Activated CD4-positive, alpha-beta memory T cell treated with anti-CD3 and anti-CD28 coated beads, Interleukin-2, amount 10 ng/mL, durations not matched to agents 7 days and 5 days (primary cell): ENCODE measurements at regions of chr19 and their contacts with region 1.

Region 1: DNA sequence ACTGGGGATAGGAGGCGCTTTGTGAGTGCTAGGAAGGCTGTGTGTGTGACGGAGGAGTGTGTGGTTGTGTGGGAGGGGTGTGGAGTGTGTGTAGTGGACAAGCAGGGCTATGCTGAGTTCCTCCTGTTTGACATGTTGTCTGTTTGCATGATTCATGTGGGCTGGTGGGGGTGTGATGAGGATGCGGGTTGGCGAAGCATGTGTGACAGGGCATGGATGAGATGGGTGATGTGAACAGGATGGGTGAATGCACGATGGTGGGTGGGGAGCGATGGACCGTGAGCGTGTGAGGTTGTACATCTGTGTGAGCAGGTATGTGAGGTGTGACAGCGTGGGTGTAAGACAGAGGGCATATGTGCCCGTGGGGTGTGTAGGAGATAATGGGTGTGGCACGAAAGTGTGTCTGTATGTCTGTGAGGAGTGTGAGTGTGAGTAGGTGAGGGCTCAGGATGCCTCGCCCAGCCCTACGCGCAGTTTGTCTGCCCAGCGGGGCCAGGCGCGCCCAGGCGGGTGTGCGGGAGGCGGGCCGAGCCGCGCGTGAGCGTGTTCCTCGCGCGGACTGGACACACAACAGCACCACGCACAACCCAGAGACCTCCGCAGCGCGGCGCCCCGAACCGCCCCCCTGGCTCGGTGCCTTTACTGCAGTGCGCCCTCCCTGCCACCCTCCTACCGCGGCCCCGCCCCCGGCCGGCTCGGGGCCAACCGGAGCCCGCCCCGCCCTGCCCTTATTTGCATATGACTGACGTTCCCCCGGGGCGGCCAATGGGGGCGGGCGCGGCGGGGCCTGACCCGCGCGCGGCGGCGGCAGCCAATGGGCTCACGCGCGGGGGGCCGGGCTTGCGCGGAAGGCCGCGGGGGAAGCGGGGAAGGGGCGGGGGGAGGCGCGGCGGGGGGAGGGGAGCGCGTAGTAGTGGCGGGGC is 14.4 kb downstream of the CIC start:
- DNase-seq: peak; percentile 97
- H3K4me3 Mint-ChIP-seq: no peak overlapping the region
- H3K27ac Mint-ChIP-seq: no peak overlapping the region
- H3K4me1 Mint-ChIP-seq: peaks cover 31% of the 10 kb centered on the region
- H3K27me3 Mint-ChIP-seq: no peaks in the 10 kb centered on the region

Region 2: GRCh38 chr19:42121656-42122069 is 161.7 kb before region 1 on chr19:
- CTCF ChIA-PET with region 1: interaction called, 18 read pairs
- POLR2A ChIA-PET with region 1: interaction called, 10 read pairs
- DNase-seq: peak; percentile 80
- H3K4me3 Mint-ChIP-seq: peak overlapping the region; percentile 73
- H3K27ac Mint-ChIP-seq: peak overlapping the region; percentile 94
- H3K4me1 Mint-ChIP-seq: peaks cover 44% of the 10 kb centered on the region
- H3K27me3 Mint-ChIP-seq: no peaks in the 10 kb centered on the region

Region 3: GRCh38 chr19:42176990-42177685 is 106.3 kb before region 1 on chr19:
- CTCF ChIA-PET with region 1: interaction called, 13 read pairs
- POLR2A ChIA-PET with region 1: no interaction called
- DNase-seq: peak; percentile 81
- H3K4me3 Mint-ChIP-seq: no peak overlapping the region
- H3K27ac Mint-ChIP-seq: no peak overlapping the region
- H3K4me1 Mint-ChIP-seq: peaks cover 19% of the 10 kb centered on the region
- H3K27me3 Mint-ChIP-seq: peaks cover 30% of the 10 kb centered on the region

Region 4: GRCh38 chr19:42199440-42200115 is 83.8 kb before region 1 on chr19:
- CTCF ChIA-PET with region 1: interaction called, 10 read pairs
- POLR2A ChIA-PET with region 1: interaction called, 23 read pairs
- DNase-seq: peak; percentile 91
- H3K4me3 Mint-ChIP-seq: peak overlapping the region; percentile 72
- H3K27ac Mint-ChIP-seq: peak overlapping the region; percentile 98
- H3K4me1 Mint-ChIP-seq: peaks cover 86% of the 10 kb centered on the region
- H3K27me3 Mint-ChIP-seq: no peaks in the 10 kb centered on the region

Region 5: DNA sequence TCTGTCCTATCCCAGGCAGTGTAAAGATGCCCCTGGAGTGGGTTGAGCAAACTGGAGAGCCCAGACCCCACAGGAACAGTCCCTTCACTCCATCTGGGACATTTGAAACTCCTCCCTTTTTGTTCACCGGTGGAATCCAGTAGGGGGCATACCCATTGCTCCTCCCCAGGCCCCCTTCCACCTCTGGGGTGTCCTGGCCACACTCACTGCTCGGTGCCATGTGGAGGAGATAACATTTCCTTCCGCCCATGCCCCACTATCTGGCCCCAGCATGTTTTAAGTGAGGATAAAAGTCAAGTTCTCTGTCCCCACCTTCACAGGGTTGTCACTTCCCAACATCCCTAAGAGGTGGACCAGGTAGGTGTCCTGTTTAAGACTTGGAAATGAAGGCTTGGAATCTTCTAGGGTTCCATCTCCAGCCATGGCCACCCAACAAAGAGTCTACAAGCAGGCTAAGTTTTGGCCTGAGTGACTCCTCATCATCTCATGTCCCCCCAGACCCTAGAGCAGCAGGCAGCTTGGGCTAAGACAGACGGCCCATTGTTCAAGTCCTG is 54.0 kb before region 1 on chr19:
- CTCF ChIA-PET with region 1: no interaction called
- POLR2A ChIA-PET with region 1: no interaction called
- DNase-seq: no peak
- H3K4me3 Mint-ChIP-seq: no peak overlapping the region
- H3K27ac Mint-ChIP-seq: peak overlapping the region; percentile 36
- H3K4me1 Mint-ChIP-seq: peaks cover 19% of the 10 kb centered on the region
- H3K27me3 Mint-ChIP-seq: no peaks in the 10 kb centered on the region

Region 6: DNA sequence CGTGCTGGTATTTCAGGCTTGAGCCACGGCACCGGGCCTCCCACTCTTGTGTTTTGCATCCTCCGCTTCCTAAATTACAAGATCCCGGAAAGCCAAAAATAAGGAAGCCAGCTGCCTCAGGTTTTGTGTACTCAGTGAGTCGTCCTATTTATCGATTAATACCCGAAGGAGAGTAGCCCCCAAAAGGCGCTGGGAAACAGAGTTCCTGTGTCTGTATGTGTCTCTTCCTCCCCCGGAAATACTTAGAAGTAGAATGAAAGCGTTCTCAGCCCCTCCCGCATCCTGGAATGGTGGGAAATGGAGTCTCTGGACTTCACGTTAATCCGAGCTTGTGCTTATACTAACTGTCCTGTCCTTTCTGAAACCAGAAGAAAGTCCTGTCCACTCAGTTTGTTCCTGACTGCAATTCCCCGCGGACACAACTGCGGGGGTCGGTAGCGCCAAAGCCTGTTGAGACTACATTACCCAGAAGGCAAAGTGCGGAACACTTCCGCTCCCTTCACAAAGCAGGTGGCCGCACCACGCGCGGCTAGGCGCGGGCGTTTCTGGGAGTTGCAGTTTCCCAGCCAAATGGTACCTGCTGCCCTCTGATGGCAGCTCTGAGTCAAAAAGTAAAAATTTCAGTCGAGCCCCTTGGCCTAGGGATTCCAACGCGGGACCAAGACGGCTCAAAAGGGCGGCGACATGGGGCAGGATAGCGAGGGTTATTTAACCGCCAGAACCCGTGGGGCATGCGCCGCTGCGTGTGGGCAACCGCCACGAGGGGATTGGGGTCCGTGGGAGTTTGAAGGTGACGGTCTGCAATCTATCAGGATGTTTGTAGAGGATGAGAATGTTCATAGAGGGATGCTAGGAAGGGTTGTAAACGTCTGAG is 38.8 kb before region 1 on chr19:
- CTCF ChIA-PET with region 1: interaction called, 64 read pairs
- POLR2A ChIA-PET with region 1: interaction called, 106 read pairs
- DNase-seq: peak; percentile 95
- H3K4me3 Mint-ChIP-seq: peak overlapping the region; percentile 83
- H3K27ac Mint-ChIP-seq: peak overlapping the region; percentile 90
- H3K4me1 Mint-ChIP-seq: peaks cover 49% of the 10 kb centered on the region
- H3K27me3 Mint-ChIP-seq: no peaks in the 10 kb centered on the region

Region 7: GRCh38 chr19:42268704-42269477 is 14.5 kb before region 1 on chr19 and contains the start of gene CIC:
- CTCF ChIA-PET with region 1: interaction called, 43 read pairs
- POLR2A ChIA-PET with region 1: interaction called, 48 read pairs
- DNase-seq: peak; percentile 99
- H3K4me3 Mint-ChIP-seq: no peak within 1 kb of the TSS
- H3K27ac Mint-ChIP-seq: peak within 1 kb of the TSS; percentile 99
- H3K4me1 Mint-ChIP-seq: peaks cover 32% of the 10 kb centered on the region
- H3K27me3 Mint-ChIP-seq: no peaks in the 10 kb centered on the region
- total RNA-seq, gene CIC: 86.5 to 88.8 TPM